Sigmoid colon (tissue), 7 donors: ENCODE measurements at regions of chr6 and their contacts with region 1.

Region 1: GRCh38 chr6:127737009-127737486 is 160.1 kb downstream of the C6orf58 start:
- DNase-seq: no peak
- H3K4me3 ChIP-seq: no peak overlapping the region
- H3K27ac ChIP-seq: no peak overlapping the region
- H3K4me1 ChIP-seq: peaks cover 0 to 11% (median 0%) of the 10 kb centered on the region in 4 donors
- H3K27me3 ChIP-seq: no peaks in the 10 kb centered on the region
- CTCF ChIP-seq: peak; percentile 21 to 55 (median 42)
- EP300 ChIP-seq: no peak
- POLR2A ChIP-seq: no peak

Region 2: GRCh38 chr6:127716465-127716864 is 20.6 kb before region 1 on chr6:
- intact Hi-C with region 1: no loop called
- DNase-seq: no peak
- H3K4me3 ChIP-seq: no peak overlapping the region
- H3K27ac ChIP-seq: peak overlapping the region in 1 of 4 donors; percentile 48
- H3K4me1 ChIP-seq: peaks cover 0 to 32% (median 20%) of the 10 kb centered on the region in 4 donors
- H3K27me3 ChIP-seq: no peaks in the 10 kb centered on the region
- CTCF ChIP-seq: no peak
- EP300 ChIP-seq: peak in 1 of 4 donors; percentile 6
- POLR2A ChIP-seq: no peak

Region 3: GRCh38 chr6:127900935-127901334 is 163.9 kb after region 1 on chr6 and contains the start of gene THEMIS:
- intact Hi-C with region 1: no loop called
- DNase-seq: no peak
- H3K4me3 ChIP-seq: no peak within 1 kb of the TSS
- H3K27ac ChIP-seq: no peak within 1 kb of the TSS
- H3K4me1 ChIP-seq: no peaks in the 10 kb centered on the region
- H3K27me3 ChIP-seq: no peaks in the 10 kb centered on the region
- CTCF ChIP-seq: no peak
- EP300 ChIP-seq: no peak
- POLR2A ChIP-seq: no peak
- total RNA-seq, gene THEMIS: 0.33 to 0.71 (median 0.41) TPM in 3 of 4 donors, not detected in the other

Region 4: GRCh38 chr6:128731249-128732165 is 994.5 kb after region 1 on chr6:
- intact Hi-C with region 1: loop called (anchors 2 kb)
- DNase-seq: no peak
- H3K4me3 ChIP-seq: no peak overlapping the region
- H3K27ac ChIP-seq: no peak overlapping the region
- H3K4me1 ChIP-seq: no peaks in the 10 kb centered on the region
- H3K27me3 ChIP-seq: no peaks in the 10 kb centered on the region
- CTCF ChIP-seq: peak in 1 of 4 experiments; percentile 42
- EP300 ChIP-seq: no peak
- POLR2A ChIP-seq: no peak